ENCODE measurements at regions of chr13 and their contacts with region 1.

Region 1: GRCh38 chr13:26985285-26985878 is 186.2 kb downstream of the USP12 start:
- DNase-seq: peak; percentile 43 to 85 (median 69)
- ATAC-seq: peak; percentile 96
- H3K4me3 ChIP-seq: no peak overlapping the region
- H3K4me3 Mint-ChIP-seq: no peak overlapping the region
- H3K27ac ChIP-seq: no peak overlapping the region
- H3K27ac Mint-ChIP-seq: no peak overlapping the region
- H3K4me1 ChIP-seq: no peaks in the 10 kb centered on the region
- H3K4me1 Mint-ChIP-seq: peaks cover 3% of the 10 kb centered on the region
- H3K27me3 ChIP-seq: no peaks in the 10 kb centered on the region
- H3K27me3 Mint-ChIP-seq: peaks cover 16% of the 10 kb centered on the region
- CTCF ChIP-seq: peak; percentile 87

Region 2: GRCh38 chr13:26971990-26972887 is 13.1 kb before region 1 on chr13:
- CTCF ChIA-PET with region 1: interaction called, 13 read pairs
- POLR2A ChIA-PET with region 1: no interaction called
- intact Hi-C with region 1: no loop called
- DNase-seq: peak in 4 of 9 experiments; percentile 8 to 54 (median 40)
- ATAC-seq: no peak
- H3K4me3 ChIP-seq: no peak overlapping the region
- H3K4me3 Mint-ChIP-seq: no peak overlapping the region
- H3K27ac ChIP-seq: no peak overlapping the region
- H3K27ac Mint-ChIP-seq: peak overlapping the region; percentile 74
- H3K4me1 ChIP-seq: no peaks in the 10 kb centered on the region
- H3K4me1 Mint-ChIP-seq: peaks cover 4% of the 10 kb centered on the region
- H3K27me3 ChIP-seq: no peaks in the 10 kb centered on the region
- H3K27me3 Mint-ChIP-seq: peaks cover 2% of the 10 kb centered on the region
- CTCF ChIP-seq: no peak

Region 3: GRCh38 chr13:27270594-27271520 is 285.5 kb after region 1 on chr13 and contains the start of gene RASL11A:
- CTCF ChIA-PET with region 1: interaction called, 16 read pairs
- POLR2A ChIA-PET with region 1: no interaction called
- intact Hi-C with region 1: no loop called
- DNase-seq: peak; percentile 49 to 85 (median 74)
- ATAC-seq: peak; percentile 93
- H3K4me3 ChIP-seq: peak within 1 kb of the TSS; percentile 58 to 88
- H3K4me3 Mint-ChIP-seq: peak within 1 kb of the TSS; percentile 92
- H3K27ac ChIP-seq: peak within 1 kb of the TSS in 1 of 2 experiments; percentile 46
- H3K27ac Mint-ChIP-seq: peak within 1 kb of the TSS; percentile 86
- H3K4me1 ChIP-seq: peaks cover 9% of the 10 kb centered on the region
- H3K4me1 Mint-ChIP-seq: peaks cover 25% of the 10 kb centered on the region
- H3K27me3 ChIP-seq: no peaks in the 10 kb centered on the region
- H3K27me3 Mint-ChIP-seq: peaks cover 2% of the 10 kb centered on the region
- CTCF ChIP-seq: peak; percentile 98
- total RNA-seq, gene RASL11A: 9.0 to 12.9 TPM

Region 4: GRCh38 chr13:27353166-27353583 is 367.8 kb after region 1 on chr13:
- CTCF ChIA-PET with region 1: interaction called, 251 read pairs
- POLR2A ChIA-PET with region 1: interaction called, 3 read pairs
- intact Hi-C with region 1: no loop called
- DNase-seq: no peak
- ATAC-seq: no peak
- H3K4me3 ChIP-seq: peak overlapping the region in 1 of 2 experiments; percentile 22
- H3K4me3 Mint-ChIP-seq: peak overlapping the region; percentile 49
- H3K27ac ChIP-seq: no peak overlapping the region
- H3K27ac Mint-ChIP-seq: no peak overlapping the region
- H3K4me1 ChIP-seq: no peaks in the 10 kb centered on the region
- H3K4me1 Mint-ChIP-seq: no peaks in the 10 kb centered on the region
- H3K27me3 ChIP-seq: no peaks in the 10 kb centered on the region
- H3K27me3 Mint-ChIP-seq: peaks cover 9% of the 10 kb centered on the region
- CTCF ChIP-seq: no peak

Region 5: DNA sequence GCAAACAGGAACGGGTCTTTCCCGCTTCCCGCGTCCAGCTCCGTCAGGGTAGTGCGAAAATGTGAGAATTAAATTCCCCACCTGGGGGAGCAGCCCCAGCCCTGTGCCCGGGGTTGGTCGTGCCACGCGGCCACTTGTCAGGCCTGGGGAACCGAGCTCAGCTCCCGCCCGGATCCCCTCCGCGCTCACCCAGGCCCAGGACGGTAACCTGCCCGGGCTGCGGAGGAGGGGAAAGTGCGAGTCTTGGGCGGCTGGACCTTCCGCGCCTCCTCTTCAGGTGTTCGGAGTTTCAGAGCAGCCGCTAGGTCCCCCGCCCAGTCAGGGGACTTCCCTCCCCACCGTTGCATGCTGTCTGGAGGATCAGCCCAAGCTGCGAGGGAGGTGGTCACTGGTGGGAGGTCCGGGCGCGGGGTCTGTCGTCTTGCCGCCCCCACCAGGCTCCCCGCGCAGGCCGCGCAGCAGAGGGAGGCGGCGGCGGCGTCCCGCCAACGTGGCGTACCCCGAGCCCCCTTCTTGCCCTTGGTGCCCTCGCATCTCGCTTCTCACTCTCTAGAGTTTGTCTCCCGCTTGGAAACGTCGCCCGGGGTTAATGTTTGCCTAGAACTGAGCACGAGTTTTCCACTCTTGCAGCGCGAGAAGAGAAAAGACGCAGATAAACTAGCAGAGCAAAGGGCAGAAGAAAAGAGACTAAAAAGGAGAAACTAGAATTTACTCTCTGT is 995.1 kb after region 1 on chr13:
- CTCF ChIA-PET with region 1: interaction called, 23 read pairs
- POLR2A ChIA-PET with region 1: no interaction called
- intact Hi-C with region 1: loop called (anchors 2 kb)
- DNase-seq: no peak
- ATAC-seq: no peak
- H3K4me3 ChIP-seq: no peak overlapping the region
- H3K4me3 Mint-ChIP-seq: no peak overlapping the region
- H3K27ac ChIP-seq: no peak overlapping the region
- H3K27ac Mint-ChIP-seq: no peak overlapping the region
- H3K4me1 ChIP-seq: no peaks in the 10 kb centered on the region
- H3K4me1 Mint-ChIP-seq: peaks cover 29% of the 10 kb centered on the region
- H3K27me3 ChIP-seq: peaks cover 6 to 24% of the 10 kb centered on the region in 2 experiments
- H3K27me3 Mint-ChIP-seq: peaks cover 64% of the 10 kb centered on the region
- CTCF ChIP-seq: no peak